ENCODE measurements at regions of chr9 and their contacts with region 1.

Region 1: DNA sequence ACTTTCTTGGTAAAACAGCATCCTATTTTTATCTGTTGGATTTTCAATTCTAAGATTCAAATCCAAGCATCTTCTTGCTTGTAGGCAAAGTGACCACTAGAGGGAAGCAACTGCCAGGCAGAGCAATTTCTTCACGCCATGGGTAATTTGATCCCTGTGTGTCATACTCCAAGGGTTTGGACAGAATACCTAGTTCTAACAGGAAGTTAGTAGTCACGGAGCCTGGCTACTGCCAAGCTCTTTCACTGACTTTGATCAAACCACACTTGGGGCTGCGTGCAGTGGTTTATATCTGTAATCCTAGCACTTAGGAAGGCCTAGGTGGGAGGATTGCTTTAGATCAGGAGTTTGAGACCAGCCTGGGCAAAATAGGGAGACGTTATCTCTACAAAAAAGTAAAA is 473.6 kb upstream of the TNC start:
- DNase-seq: peak; percentile 96
- H3K4me3 ChIP-seq: no peak overlapping the region
- H3K27me3 ChIP-seq: no peaks in the 10 kb centered on the region
- CTCF ChIP-seq: peak; percentile 91

Region 2: GRCh38 chr9:115650768-115651167 is 59.2 kb after region 1 on chr9:
- CTCF ChIA-PET with region 1: interaction called, 14 read pairs
- POLR2A ChIA-PET with region 1: interaction called, 4 read pairs
- DNase-seq: peak; percentile 93
- H3K4me3 ChIP-seq: no peak overlapping the region
- H3K27me3 ChIP-seq: no peaks in the 10 kb centered on the region
- CTCF ChIP-seq: no peak

Region 3: DNA sequence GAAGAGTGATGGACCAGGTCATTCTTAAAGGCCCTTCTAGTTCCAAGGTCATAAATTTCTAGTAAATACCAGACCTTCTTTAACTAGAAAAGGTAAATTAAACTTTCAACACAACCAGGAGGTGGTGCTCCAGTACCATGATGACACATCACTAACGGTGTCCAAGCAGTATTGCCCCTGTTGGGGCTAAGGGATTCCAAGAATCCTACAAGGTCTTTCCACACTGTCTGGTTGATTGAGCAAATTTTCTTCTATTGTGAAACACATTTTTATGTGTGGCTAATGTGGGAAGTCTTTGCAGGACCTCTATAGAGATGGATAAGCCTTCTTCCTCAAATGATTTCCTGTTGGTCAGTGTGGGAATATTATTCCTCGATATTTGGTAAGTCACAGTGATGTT is 102.4 kb after region 1 on chr9:
- CTCF ChIA-PET with region 1: interaction called, 15 read pairs
- POLR2A ChIA-PET with region 1: interaction called, 4 read pairs
- DNase-seq: peak; percentile 86
- H3K4me3 ChIP-seq: no peak overlapping the region
- H3K27me3 ChIP-seq: no peaks in the 10 kb centered on the region
- CTCF ChIP-seq: peak; percentile 52

Region 4: DNA sequence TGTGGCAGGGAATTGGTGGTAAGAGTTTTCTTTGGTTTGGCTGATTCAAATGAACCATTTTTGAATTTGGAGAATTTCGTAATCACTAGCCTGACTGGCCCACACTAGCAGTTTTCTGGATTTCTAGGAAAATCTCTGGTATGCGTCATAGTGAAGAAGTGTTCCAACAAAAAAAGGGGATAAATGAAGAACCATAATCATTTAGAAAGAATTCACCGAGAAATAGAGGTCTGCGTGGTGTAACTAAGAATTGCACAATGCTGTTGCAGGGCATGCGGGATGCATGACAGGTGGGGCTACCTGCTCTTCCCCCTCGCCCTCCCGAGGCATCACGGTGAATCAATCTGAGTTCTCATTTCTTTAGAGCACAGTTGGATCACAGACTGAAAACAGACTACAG is 329.7 kb after region 1 on chr9:
- CTCF ChIA-PET with region 1: no interaction called
- POLR2A ChIA-PET with region 1: no interaction called
- DNase-seq: no peak
- H3K4me3 ChIP-seq: no peak overlapping the region
- H3K27me3 ChIP-seq: no peaks in the 10 kb centered on the region
- CTCF ChIP-seq: no peak

Region 5: DNA sequence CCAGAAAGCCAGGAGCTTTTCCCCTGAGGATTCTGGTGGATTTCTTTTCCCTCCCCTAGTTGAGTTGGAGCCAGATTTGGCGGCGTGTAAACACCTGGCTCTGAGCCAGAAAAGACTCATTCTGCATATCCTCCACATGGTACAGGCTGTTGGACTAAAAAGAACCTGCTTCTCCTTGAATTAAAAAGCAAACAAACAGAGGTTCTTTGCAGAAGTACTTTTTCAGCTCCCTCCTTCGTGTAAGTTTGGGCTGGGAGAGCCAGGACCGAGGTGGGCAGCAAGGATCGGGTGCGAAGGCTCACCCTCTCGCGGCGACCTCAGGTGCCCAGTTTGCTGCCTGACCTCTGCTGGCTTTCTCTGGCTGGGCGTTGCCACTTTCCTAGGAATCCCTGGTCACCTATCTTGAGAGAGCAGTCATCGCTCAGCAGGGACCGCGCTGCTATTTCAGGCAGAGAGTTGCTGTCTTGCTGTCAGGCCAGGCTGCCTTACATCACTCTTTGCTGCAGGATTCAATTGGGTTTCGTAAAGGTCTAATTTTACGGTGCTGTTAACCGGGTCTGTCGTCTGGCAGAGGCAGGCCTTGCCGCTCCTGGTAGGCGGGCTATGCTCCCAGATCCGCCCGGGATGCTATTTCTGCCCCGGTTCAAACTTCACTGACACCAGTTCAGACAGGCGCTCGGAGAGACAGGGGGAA is 565.2 kb after region 1 on chr9:
- CTCF ChIA-PET with region 1: interaction called, 17 read pairs
- POLR2A ChIA-PET with region 1: interaction called, 21 read pairs
- DNase-seq: peak; percentile 64
- H3K4me3 ChIP-seq: peak overlapping the region; percentile 62
- H3K27me3 ChIP-seq: no peaks in the 10 kb centered on the region
- CTCF ChIP-seq: no peak

Region 6: GRCh38 chr9:116572095-116572748 is 980.6 kb after region 1 on chr9:
- CTCF ChIA-PET with region 1: interaction called, 91 read pairs
- POLR2A ChIA-PET with region 1: no interaction called
- DNase-seq: no peak
- H3K4me3 ChIP-seq: no peak overlapping the region
- H3K27me3 ChIP-seq: no peaks in the 10 kb centered on the region
- CTCF ChIP-seq: peak; percentile 97

Region 7: GRCh38 chr9:116661037-116661954 is 1069.7 kb after region 1 on chr9:
- CTCF ChIA-PET with region 1: interaction called, 46 read pairs
- POLR2A ChIA-PET with region 1: no interaction called
- DNase-seq: peak; percentile 35
- H3K4me3 ChIP-seq: no peak overlapping the region
- H3K27me3 ChIP-seq: no peaks in the 10 kb centered on the region
- CTCF ChIP-seq: peak; percentile 72

Measured in BJ (cell line).